GM10248 (cell line): ENCODE measurements at regions of chr6 and their contacts with region 1.

Region 1: GRCh38 chr6:43339168-43339567 is 30.3 kb downstream of the ZNF318 start:
- DNase-seq: peak; percentile 66
- CTCF ChIP-seq: no peak

Region 2: GRCh38 chr6:43274916-43275597 is 64.1 kb before region 1 on chr6:
- CTCF ChIA-PET with region 1: no interaction called
- POLR2A ChIA-PET with region 1: no interaction called
- DNase-seq: peak; percentile 70
- CTCF ChIP-seq: no peak

Region 3: DNA sequence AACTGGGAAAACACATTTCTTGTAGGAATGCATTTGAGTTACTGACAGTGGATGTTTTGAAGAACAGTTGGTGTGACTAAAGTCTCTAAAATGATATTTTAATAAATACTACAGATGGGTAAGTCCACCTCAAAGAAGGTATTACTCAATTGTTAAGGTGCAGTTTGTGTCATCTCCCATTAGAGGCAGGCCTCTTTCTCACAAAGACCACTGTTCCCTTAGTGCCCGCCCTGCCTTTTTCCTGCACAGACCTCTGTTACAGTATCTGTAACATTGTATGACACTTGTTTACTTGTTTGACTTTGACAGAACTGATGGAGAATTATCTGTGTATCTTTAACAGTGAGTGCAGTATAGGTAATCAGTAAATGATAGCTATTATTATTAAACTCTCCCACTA is 25.4 kb before region 1 on chr6:
- CTCF ChIA-PET with region 1: interaction called, 10 read pairs
- POLR2A ChIA-PET with region 1: no interaction called
- DNase-seq: no peak
- CTCF ChIP-seq: no peak

Region 4: GRCh38 chr6:43355862-43356590 is 16.9 kb after region 1 on chr6:
- CTCF ChIA-PET with region 1: interaction called, 11 read pairs
- POLR2A ChIA-PET with region 1: interaction called, 4 read pairs
- DNase-seq: no peak
- CTCF ChIP-seq: peak; percentile 39

Region 5: DNA sequence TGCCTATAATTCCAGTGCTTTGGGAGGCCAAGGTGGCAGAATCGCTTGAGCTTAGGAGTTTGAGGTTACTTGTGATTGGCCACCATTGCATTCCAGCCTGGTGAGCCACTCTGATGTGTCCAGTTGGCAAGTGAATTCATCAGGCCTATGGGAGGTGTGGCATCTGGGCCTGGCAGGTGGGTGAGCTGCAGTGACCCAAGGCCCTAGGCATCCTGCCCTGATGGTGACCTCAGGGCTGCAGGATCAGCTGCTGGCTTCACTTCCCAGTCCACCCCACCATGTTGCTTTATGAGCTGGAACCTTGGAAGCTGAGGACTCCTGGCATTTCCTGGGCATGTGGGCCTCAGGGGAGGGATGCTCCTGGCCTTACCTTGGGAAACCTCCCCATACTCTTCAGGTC is 326.2 kb after region 1 on chr6:
- CTCF ChIA-PET with region 1: no interaction called
- POLR2A ChIA-PET with region 1: no interaction called
- DNase-seq: no peak
- CTCF ChIP-seq: no peak